Tibial artery (tissue), 4 donors: ENCODE measurements at regions of chr1 and their contacts with region 1.

Region 1: DNA sequence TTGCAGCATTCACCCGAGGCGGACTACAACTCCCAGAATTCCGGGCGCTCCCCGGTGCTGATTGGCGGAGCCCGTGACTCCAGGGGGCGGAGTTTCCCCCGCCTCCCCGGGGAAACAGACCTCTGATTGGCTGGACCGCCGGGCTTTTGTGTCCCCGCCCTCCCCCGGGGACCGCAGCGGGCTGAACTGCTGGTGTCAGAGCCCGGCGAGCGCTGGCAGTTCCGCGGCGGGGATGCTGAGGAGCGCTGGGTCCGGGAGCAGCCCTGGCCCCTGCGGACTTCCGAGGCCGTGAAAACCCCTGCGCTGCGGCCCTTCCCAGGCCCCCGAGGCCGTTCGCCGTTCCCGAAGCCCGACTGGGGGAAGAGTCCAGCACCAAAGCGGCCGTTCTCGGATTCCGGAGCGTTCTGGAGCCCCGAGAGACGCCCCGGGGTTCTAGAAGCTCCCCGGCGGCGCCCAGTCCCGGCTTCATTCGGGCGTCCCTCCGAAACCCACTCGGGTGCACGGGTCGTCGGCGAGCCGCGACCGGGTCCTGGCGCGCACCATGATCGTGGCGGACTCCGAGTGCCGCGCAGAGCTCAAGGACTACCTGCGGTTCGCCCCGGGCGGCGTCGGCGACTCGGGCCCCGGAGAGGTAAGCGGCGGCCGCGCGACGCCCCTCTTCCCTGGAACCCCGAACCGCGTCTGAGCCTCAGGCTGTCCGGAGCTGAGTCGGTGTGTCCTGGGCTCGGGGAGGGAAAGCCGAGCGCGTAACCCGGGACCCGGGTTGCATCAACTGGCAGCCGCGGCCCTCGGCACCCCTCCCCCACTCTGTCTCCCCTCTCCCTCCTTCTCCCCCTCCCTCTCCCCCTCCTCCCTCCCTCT is at the start of gene SESN2:
- DNase-seq: peak; percentile 100
- H3K4me3 ChIP-seq: peak within 1 kb of the TSS; percentile 78 to 98
- H3K27ac ChIP-seq: peak within 1 kb of the TSS; percentile 87 to 93
- H3K4me1 ChIP-seq: peaks cover 0 to 27% (median 20%) of the 10 kb centered on the region in 4 donors
- H3K27me3 ChIP-seq: peaks cover 0 to 2% of the 10 kb centered on the region in 2 donors
- CTCF ChIP-seq: peak in 1 of 2 experiments; percentile 8

Region 2: GRCh38 chr1:28369371-28370238 is 110.1 kb after region 1 on chr1 and contains the start of gene PHACTR4:
- intact Hi-C with region 1: loop called (anchors 5 kb)
- DNase-seq: peak; percentile 93 to 94
- H3K4me3 ChIP-seq: peak within 1 kb of the TSS; percentile 80 to 98
- H3K27ac ChIP-seq: peak within 1 kb of the TSS; percentile 93 to 97
- H3K4me1 ChIP-seq: peaks cover 0 to 37% (median 21%) of the 10 kb centered on the region in 4 donors
- H3K27me3 ChIP-seq: no peaks in the 10 kb centered on the region
- CTCF ChIP-seq: peak in 1 of 2 experiments; percentile 6

Region 3: GRCh38 chr1:28505406-28506187 is 246.1 kb after region 1 on chr1 and contains the start of gene RCC1:
- intact Hi-C with region 1: loop called (anchors 10 kb)
- DNase-seq: peak; percentile 97 to 99
- H3K4me3 ChIP-seq: peak within 1 kb of the TSS; percentile 70 to 75
- H3K27ac ChIP-seq: peak within 1 kb of the TSS; percentile 79 to 92
- H3K4me1 ChIP-seq: peaks cover 0 to 41% (median 33%) of the 10 kb centered on the region in 4 donors
- H3K27me3 ChIP-seq: no peaks in the 10 kb centered on the region
- CTCF ChIP-seq: no peak